Activated T-helper 1 cell treated with anti-CD3 and anti-CD28 coated beads, Interleukin-12 subunit alpha, Interleukin-12 subunit beta, Interleukin-2, Interleukin-4 antibody, amounts not matched to agents 30 ng/mL and 10 ng/mL and 1 ng/mL, durations not matched to agents 14 hours and 24 hours and 36 hours (primary cell): ENCODE measurements at regions of chr2 and their contacts with region 1.

Region 1: GRCh38 chr2:99337113-99338028 is at the start of gene EIF5B:
- DNase-seq: peak; percentile 93
- H3K4me3 Mint-ChIP-seq: no peak within 1 kb of the TSS
- H3K27ac Mint-ChIP-seq: no peak within 1 kb of the TSS
- H3K4me1 Mint-ChIP-seq: peaks cover 47% of the 10 kb centered on the region
- H3K27me3 Mint-ChIP-seq: no peaks in the 10 kb centered on the region
- total RNA-seq, gene EIF5B: 84.7 and 84.8 TPM in 2 replicates

Region 2: DNA sequence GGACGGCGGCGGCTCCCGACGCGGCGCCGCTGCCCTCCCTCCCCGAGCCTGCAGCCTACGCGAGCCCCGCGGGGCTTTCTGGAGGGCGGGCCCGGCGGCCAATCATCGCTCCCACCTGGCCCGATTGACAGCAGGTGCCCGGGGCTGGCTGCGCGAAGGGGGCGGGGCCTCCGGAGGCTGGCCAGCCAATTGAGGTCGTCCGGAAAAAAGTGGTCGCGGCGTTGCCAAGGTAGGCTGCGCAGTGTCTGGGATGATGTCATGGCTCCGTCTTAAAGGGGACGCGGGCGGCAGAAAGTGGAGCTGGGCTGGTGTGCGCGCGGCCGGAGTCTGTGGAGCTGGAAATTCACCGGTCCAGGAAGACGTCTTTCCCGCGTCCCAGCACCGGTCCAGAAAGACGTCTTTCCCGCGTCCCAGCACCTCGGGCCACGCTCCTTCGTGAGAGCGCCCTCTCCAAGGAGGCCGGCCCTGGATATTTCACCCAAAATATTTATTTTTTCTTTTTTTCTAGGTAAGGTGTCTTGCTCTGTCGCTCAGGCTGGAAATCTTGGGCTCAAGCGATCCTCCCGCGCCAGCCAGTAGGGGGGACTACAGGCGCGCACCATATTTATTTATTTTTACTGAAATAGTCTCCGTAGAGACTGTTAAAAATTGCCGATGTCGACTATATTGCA is 1673.3 kb before region 1 on chr2 and contains the start of gene ACTR1B:
- intact Hi-C with region 1: loop called (anchors 2 kb)
- DNase-seq: peak; percentile 98
- H3K4me3 Mint-ChIP-seq: peak within 1 kb of the TSS; percentile 94
- H3K27ac Mint-ChIP-seq: peak within 1 kb of the TSS; percentile 97
- H3K4me1 Mint-ChIP-seq: peaks cover 39% of the 10 kb centered on the region
- H3K27me3 Mint-ChIP-seq: no peaks in the 10 kb centered on the region
- total RNA-seq, gene ACTR1B: 101 and 102 TPM in 2 replicates

Region 3: DNA sequence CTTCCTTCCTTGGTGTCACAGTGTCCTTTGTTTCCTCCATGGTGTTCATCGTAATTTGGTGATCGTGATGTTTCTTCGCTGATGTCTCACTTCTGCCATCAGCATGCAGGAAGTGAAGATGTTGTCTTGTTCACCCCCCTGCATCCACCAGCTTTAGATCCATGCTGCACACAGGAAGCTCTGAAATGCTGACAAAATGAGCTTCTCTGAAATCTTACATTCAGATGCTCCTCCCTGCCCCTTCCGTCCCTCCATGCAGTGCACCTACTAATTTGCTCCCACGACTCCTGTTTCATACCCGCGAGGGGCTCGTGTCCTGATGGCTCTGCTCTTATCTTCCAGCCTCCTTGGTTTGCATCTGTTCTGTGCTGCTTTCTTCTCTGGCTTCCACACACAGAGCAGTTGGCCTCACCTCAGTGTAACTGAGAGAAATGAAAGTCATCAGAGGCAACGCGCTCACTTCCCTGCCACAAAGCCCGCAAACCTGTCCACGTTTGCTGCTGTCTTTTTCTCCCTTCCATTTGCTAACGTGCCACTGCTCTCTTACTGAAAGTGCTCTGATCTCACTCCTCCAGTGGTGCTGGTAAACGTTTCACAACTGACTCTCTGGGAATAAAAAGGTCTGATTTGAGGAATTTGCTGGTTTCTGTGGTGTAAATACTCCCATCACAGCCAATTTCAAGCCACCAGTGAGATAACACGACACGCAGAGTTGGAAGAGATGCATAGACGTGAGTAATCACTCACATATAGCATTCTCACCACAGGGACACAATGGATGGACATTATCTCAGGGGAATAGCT is 565.4 kb before region 1 on chr2:
- intact Hi-C with region 1: loop called (anchors 5 kb)
- DNase-seq: peak; percentile 63
- H3K4me3 Mint-ChIP-seq: peak overlapping the region; percentile 92
- H3K27ac Mint-ChIP-seq: peak overlapping the region; percentile 99
- H3K4me1 Mint-ChIP-seq: peaks cover 64% of the 10 kb centered on the region
- H3K27me3 Mint-ChIP-seq: peaks cover 2% of the 10 kb centered on the region

Region 4: DNA sequence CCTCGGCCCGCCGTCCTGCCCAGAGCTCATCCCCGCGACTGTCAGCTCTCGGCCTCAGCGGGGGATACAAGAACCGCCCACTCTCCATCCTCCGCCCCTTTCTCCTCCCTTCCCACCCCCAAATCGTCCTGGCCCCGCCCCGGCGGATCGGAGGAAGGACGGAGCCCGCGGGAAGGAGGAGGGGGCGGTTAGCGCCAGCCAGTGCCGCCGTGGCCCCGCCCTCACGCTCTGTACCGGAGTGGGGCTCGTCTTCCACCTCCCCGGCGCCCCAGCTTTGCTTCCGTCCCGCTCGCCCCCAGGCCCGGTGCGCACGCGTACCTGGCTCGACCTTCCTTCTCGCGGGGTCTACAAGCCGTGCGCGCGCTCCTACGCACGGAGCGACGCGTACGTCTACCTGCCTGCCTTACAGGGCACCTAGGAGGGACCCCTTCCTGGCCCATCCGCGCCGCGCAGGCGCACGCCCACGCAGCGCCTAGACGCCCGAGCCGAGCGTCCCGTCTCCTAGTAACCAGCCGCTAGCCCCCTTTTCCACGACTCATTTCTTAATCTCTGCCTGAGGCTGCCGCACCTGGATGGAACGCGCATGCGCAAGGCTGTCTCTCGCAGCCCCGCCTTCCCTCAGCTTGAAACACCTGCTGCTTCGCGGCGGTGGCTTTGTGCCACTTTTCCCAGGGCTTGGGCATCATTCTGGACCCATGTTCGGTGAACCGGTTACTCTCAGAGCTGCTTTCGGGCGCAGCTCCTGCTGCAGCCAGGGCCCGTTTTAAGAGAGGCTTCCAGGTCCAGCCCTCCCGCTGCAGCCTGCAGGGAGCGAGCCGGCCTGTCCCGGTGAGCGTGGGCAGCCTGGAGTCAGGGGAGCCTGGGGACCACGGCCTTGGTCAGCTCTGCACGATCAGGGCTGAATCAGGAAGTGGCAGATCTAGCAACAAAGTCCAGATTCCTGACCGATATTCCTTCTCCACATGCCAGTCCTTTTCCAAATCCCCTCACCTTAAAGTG is 196.0 kb before region 1 on chr2 and contains the start of gene C2orf15:
- intact Hi-C with region 1: loop called (anchors 1 kb)
- DNase-seq: peak; percentile 93
- H3K4me3 Mint-ChIP-seq: peak within 1 kb of the TSS; percentile 96
- H3K27ac Mint-ChIP-seq: peak within 1 kb of the TSS; percentile 82
- H3K4me1 Mint-ChIP-seq: peaks cover 10% of the 10 kb centered on the region
- H3K27me3 Mint-ChIP-seq: peaks cover 14% of the 10 kb centered on the region
- total RNA-seq, gene C2orf15: 0.29 TPM in 1 of 2 replicates, not detected in the other

Region 5: GRCh38 chr2:99180755-99181623 is 156.4 kb before region 1 on chr2 and contains the starts of genes MITD1 and MRPL30:
- intact Hi-C with region 1: loop called (anchors 1 kb)
- DNase-seq: peak; percentile 90
- H3K4me3 Mint-ChIP-seq: peak within 1 kb of the TSS; percentile 99
- H3K27ac Mint-ChIP-seq: peak within 1 kb of the TSS; percentile 96
- H3K4me1 Mint-ChIP-seq: peaks cover 36% of the 10 kb centered on the region
- H3K27me3 Mint-ChIP-seq: no peaks in the 10 kb centered on the region
- total RNA-seq, gene MITD1: 45.3 and 50.1 TPM in 2 replicates
- total RNA-seq, gene MRPL30: 25.5 and 27.8 TPM in 2 replicates

Region 6: DNA sequence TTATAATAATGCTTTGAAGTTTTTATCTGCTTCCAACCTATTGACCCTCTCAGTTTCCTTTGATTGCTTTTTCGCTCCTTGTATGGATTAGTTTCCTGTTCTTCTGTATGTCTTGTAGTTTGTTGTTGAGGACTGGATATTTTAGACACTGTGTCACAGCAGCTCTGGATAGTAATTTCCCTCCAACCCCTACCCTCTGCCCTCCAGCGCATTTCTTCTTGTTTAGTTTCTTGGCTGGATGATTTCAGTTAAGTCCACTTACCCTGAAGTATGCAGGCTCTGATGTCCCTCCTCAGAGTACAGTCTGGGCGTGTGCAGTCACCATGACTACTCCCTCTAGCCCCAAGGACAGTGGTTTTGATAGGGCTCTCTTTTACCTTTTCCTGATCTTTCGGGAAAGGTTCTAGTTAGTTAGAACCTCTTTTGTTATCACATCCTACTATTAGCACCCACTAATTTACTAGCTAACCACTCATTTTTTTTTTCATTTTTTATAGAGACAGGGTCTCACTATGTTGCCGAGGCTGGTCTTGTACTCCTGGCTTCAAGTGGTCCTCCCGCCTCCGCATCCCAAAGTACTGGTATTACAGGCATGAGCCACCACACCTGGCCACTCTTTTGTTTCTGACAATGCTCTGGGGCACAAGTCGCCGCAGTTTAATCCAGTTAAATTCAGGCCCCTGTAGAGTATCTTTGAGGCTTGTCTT is 20.1 kb before region 1 on chr2:
- intact Hi-C with region 1: no loop called
- DNase-seq: no peak
- H3K4me3 Mint-ChIP-seq: no peak overlapping the region
- H3K27ac Mint-ChIP-seq: no peak overlapping the region
- H3K4me1 Mint-ChIP-seq: no peaks in the 10 kb centered on the region
- H3K27me3 Mint-ChIP-seq: no peaks in the 10 kb centered on the region

Region 7: GRCh38 chr2:99377879-99378278 is 40.5 kb after region 1 on chr2:
- intact Hi-C with region 1: no loop called
- DNase-seq: no peak
- H3K4me3 Mint-ChIP-seq: peak overlapping the region; percentile 19
- H3K27ac Mint-ChIP-seq: no peak overlapping the region
- H3K4me1 Mint-ChIP-seq: peaks cover 19% of the 10 kb centered on the region
- H3K27me3 Mint-ChIP-seq: no peaks in the 10 kb centered on the region

Region 8: DNA sequence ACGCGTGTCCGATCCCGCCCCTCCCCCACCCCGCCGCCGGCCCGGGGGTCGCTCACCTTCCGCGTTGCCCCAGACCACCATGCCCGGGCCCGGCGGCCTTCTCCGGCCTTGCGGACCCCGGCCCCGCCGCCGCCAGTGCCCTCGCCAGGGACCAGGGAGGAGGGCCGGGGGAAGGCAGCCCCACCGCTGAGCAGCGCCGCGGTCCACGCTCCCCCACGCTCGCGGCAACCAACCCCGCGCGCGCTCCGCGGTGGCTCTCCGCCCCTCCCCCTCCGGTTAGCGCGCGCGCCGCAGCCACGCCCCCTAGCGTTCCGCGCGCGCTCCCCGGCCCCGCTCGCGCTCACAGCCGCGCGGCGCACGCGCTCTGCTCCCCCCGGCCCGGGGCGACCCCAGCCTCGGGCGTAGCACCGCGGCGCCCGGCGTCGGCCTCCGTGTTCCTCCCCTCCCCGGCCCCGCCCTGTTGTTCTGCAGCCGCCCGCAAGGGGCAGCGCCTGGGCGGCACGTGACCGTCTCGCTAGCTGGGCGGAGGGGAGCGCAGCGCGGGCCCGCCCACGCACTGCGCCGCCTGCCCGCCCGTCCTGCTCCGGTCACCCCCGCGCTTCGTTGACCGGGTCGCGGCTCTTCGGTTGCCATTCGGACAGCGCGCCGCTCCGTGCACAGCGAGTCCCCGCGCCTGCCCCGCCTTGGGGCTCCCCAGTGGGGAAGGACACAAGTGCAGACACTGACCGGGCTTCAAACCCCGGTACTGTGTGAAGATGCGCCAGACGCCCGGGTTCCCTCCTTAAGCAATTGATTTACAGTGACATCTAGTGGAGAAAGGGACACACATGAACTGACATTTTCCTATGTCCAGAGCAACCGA is 152.6 kb after region 1 on chr2 and contains the start of gene REV1:
- intact Hi-C with region 1: loop called (anchors 1 kb)
- DNase-seq: peak; percentile 87
- H3K4me3 Mint-ChIP-seq: peak within 1 kb of the TSS; percentile 94
- H3K27ac Mint-ChIP-seq: peak within 1 kb of the TSS; percentile 97
- H3K4me1 Mint-ChIP-seq: peaks cover 35% of the 10 kb centered on the region
- H3K27me3 Mint-ChIP-seq: peaks cover 3% of the 10 kb centered on the region
- total RNA-seq, gene REV1: 49.6 and 53.7 TPM in 2 replicates

Region 9: DNA sequence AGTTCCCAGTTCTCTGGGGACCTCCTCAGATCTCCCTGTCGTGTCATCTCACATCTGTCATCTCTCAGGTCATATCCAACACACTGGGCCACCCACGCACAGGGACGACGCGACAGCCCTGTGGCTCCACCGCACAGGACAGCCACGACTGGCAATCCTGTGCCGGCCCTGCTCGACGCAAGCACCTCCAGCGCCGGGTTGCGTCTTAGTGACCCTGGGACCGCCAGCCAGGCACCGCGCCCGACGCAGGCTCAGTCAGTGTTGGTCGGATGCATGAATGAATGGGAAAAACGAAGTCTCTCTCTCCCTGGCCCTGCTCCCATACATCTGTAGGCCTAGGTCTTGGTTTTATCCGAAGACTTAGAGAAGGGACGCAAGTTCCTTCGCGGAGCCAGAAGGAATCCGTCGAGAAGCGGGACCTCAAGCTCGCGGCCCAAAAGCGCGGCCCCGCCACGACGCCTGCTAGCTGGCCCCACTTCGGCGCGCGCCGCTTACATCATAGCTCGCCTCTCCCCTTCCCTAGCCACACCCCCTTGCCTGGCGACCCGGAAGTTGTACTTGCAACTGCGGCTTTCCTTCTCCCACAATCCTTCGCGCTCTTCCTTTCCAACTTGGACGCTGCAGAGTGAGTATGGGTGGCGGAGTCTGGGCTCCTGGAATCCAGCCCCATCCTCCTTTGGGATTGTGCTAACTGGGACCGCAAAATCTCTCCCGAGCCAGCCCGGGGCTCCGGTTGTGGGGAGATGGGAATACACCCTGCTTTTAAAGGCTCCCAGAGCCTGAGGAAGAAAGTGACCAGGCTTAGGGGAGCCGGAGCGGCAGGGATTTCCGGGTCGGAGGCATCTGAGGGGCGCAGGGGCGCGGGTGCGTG is 1664.6 kb after region 1 on chr2 and contains the start of gene RPL31:
- intact Hi-C with region 1: loop called (anchors 1 kb)
- DNase-seq: peak; percentile 95
- H3K4me3 Mint-ChIP-seq: peak within 1 kb of the TSS; percentile 100
- H3K27ac Mint-ChIP-seq: peak within 1 kb of the TSS; percentile 95
- H3K4me1 Mint-ChIP-seq: peaks cover 46% of the 10 kb centered on the region
- H3K27me3 Mint-ChIP-seq: peaks cover 6% of the 10 kb centered on the region
- total RNA-seq, gene RPL31: 1,048 and 1,092 TPM in 2 replicates